ENCODE measurements at regions of chr6 and their contacts with region 1.

Region 1: GRCh38 chr6:43723737-43724295 is 36.2 kb upstream of the MRPS18A start:
- DNase-seq: peak; percentile 82
- ATAC-seq: peak; percentile 75
- H3K4me3 ChIP-seq: no peak overlapping the region
- H3K4me3 Mint-ChIP-seq: no peak overlapping the region
- H3K27ac ChIP-seq: no peak overlapping the region
- H3K27ac Mint-ChIP-seq: peak overlapping the region; percentile 16
- H3K4me1 ChIP-seq: peaks cover 20 to 24% of the 10 kb centered on the region in 2 donors
- H3K4me1 Mint-ChIP-seq: peaks cover 27% of the 10 kb centered on the region
- H3K27me3 ChIP-seq: no peaks in the 10 kb centered on the region
- H3K27me3 Mint-ChIP-seq: peaks cover 9% of the 10 kb centered on the region
- CTCF ChIP-seq: peak; percentile 77

Region 2: GRCh38 chr6:43695215-43695966 is 28.4 kb before region 1 on chr6:
- CTCF ChIA-PET with region 1: no interaction called
- POLR2A ChIA-PET with region 1: no interaction called
- intact Hi-C with region 1: no loop called
- DNase-seq: no peak
- ATAC-seq: no peak
- H3K4me3 ChIP-seq: no peak overlapping the region
- H3K4me3 Mint-ChIP-seq: no peak overlapping the region
- H3K27ac ChIP-seq: no peak overlapping the region
- H3K27ac Mint-ChIP-seq: no peak overlapping the region
- H3K4me1 ChIP-seq: no peaks in the 10 kb centered on the region
- H3K4me1 Mint-ChIP-seq: no peaks in the 10 kb centered on the region
- H3K27me3 ChIP-seq: peaks cover 0 to 17% (median 0%) of the 10 kb centered on the region in 4 experiments
- H3K27me3 Mint-ChIP-seq: peaks cover 16% of the 10 kb centered on the region
- CTCF ChIP-seq: no peak

Region 3: DNA sequence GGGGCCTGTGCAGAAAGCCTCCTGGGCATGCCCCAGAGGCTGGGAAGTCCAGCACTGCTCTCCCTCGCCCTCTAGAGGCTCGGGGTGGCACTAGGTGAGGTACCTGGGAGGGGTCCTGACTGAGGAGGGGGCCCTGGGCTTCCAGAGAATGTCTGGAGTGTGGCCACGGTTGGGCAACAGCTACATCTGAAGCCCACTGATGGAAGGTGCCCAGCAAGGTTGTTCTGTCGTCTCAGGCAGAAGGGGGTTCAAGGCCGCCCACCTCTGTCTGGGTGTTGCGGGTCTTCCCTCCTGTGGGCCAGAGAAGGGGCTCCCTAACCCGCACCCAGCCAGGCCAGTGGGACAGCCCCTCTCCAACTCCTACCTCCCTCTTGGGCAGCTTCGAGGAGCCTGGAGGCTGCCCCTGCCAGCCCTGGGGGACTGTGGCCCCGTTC is 34.8 kb after region 1 on chr6:
- CTCF ChIA-PET with region 1: interaction called, 6 read pairs
- POLR2A ChIA-PET with region 1: no interaction called
- intact Hi-C with region 1: loop called (anchors 5 kb)
- DNase-seq: peak; percentile 34
- ATAC-seq: peak; percentile 66
- H3K4me3 ChIP-seq: no peak overlapping the region
- H3K4me3 Mint-ChIP-seq: no peak overlapping the region
- H3K27ac ChIP-seq: no peak overlapping the region
- H3K27ac Mint-ChIP-seq: no peak overlapping the region
- H3K4me1 ChIP-seq: no peaks in the 10 kb centered on the region
- H3K4me1 Mint-ChIP-seq: peaks cover 3% of the 10 kb centered on the region
- H3K27me3 ChIP-seq: peaks cover 0 to 3% (median 0%) of the 10 kb centered on the region in 4 experiments
- H3K27me3 Mint-ChIP-seq: peaks cover 18% of the 10 kb centered on the region
- CTCF ChIP-seq: peak; percentile 66

Region 4: GRCh38 chr6:43817192-43817591 is 93.4 kb after region 1 on chr6:
- CTCF ChIA-PET with region 1: interaction called, 3 read pairs
- POLR2A ChIA-PET with region 1: no interaction called
- intact Hi-C with region 1: loop called (anchors 2 kb)
- DNase-seq: peak; percentile 31
- ATAC-seq: peak; percentile 57
- H3K4me3 ChIP-seq: no peak overlapping the region
- H3K4me3 Mint-ChIP-seq: no peak overlapping the region
- H3K27ac ChIP-seq: no peak overlapping the region
- H3K27ac Mint-ChIP-seq: no peak overlapping the region
- H3K4me1 ChIP-seq: no peaks in the 10 kb centered on the region
- H3K4me1 Mint-ChIP-seq: no peaks in the 10 kb centered on the region
- H3K27me3 ChIP-seq: peaks cover 0 to 2% (median 0%) of the 10 kb centered on the region in 4 experiments
- H3K27me3 Mint-ChIP-seq: peaks cover 17% of the 10 kb centered on the region
- CTCF ChIP-seq: peak; percentile 10

Measured in B cell (primary cell).